HEK293T (cell line): ENCODE measurements at regions of chr1 and their contacts with region 1.

Region 1: GRCh38 chr1:32179443-32180185 is at the start of gene TXLNA:
- DNase-seq: peak; percentile 100

Region 2: GRCh38 chr1:32072622-32073298 is 106.9 kb before region 1 on chr1 and contains the start of gene TMEM39B:
- CTCF ChIA-PET with region 1: no interaction called
- POLR2A ChIA-PET with region 1: interaction called, 19 read pairs
- DNase-seq: peak; percentile 100

Region 3: GRCh38 chr1:32107742-32108661 is 71.6 kb before region 1 on chr1 and contains the start of gene KPNA6:
- CTCF ChIA-PET with region 1: no interaction called
- POLR2A ChIA-PET with region 1: interaction called, 12 read pairs
- DNase-seq: peak; percentile 89

Region 4: DNA sequence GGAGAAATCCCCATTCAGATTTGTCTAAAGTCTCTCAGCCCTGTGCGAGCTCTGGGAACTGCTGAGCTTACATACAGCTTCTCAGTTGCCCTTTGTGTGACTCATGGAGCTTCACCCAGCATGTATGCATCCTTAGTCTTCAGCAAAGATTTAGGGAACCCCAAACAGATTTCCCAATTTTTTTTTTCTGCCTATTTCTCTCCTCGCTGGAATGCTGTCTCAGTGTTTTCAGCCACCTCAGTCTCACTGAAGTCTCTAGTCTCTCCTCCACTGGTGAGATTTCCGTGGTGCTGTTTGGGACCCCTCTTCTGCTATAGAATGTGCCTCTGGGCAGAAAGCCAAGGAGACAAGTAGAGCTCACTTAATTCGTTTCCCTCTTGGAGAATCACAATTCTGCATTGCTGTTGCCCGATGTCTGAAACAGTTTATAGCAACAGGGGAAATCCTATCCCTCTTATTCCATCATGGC is 28.3 kb before region 1 on chr1:
- CTCF ChIA-PET with region 1: no interaction called
- POLR2A ChIA-PET with region 1: interaction called, 14 read pairs
- DNase-seq: peak; percentile 43

Region 5: GRCh38 chr1:32192220-32192948 is 12.8 kb after region 1 on chr1:
- CTCF ChIA-PET with region 1: interaction called, 3 read pairs
- POLR2A ChIA-PET with region 1: interaction called, 20 read pairs
- DNase-seq: no peak

Region 6: GRCh38 chr1:32200226-32201010 is 20.8 kb after region 1 on chr1 and contains the start of gene CCDC28B:
- CTCF ChIA-PET with region 1: interaction called, 3 read pairs
- POLR2A ChIA-PET with region 1: interaction called, 28 read pairs
- DNase-seq: peak; percentile 75

Region 7: DNA sequence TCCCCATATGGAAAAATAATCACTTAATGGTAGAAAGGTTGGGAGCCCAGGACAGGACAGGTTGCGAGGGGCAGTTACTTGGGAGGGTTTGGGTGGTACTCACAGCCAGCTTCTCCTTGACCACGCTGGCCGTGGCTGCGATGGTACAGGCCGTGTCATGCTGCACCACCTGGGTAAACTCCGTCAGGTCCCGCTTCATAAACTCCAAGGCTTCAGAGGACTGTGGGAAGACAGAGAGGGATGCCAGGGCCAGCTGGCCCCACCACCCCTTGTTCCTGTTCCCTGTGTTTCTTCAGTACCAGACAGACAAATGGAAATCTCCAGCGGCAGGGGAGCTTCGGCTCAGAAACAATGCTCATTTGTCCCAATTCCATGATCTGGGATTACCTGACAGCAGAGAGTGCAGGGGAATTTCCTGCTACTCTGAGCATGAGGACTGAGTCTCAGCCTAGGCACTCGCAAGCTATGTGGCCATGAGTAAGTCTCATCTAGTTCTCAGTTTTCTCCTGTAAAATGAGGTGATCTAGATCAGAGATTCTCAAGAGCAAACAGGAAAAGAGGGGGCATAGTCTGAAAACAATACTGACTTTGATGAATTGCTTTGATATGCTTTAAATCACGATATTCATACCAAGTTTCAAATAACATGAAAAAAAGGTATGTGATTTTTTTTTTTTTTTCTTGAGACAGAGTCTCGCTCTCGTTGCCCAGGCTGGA is 207.2 kb after region 1 on chr1:
- CTCF ChIA-PET with region 1: no interaction called
- POLR2A ChIA-PET with region 1: no interaction called
- DNase-seq: no peak

Region 8: GRCh38 chr1:32400876-32401631 is 221.4 kb after region 1 on chr1:
- CTCF ChIA-PET with region 1: no interaction called
- POLR2A ChIA-PET with region 1: no interaction called
- DNase-seq: peak; percentile 96